HepG2 (cell line): ENCODE measurements at regions of chr13 and their contacts with region 1.

Region 1: GRCh38 chr13:97982286-97982685 is 28.8 kb downstream of the IPO5 start:
- DNase-seq: no peak
- ATAC-seq: no peak
- H3K4me3 ChIP-seq: no peak overlapping the region
- H3K27ac ChIP-seq: no peak overlapping the region
- H3K4me1 ChIP-seq: peaks cover 46% of the 10 kb centered on the region
- H3K27me3 ChIP-seq: no peaks in the 10 kb centered on the region; a peak in 1 of 5 replicates
- CTCF ChIP-seq: no peak
- EP300 ChIP-seq: no peak
- POLR2A ChIP-seq: no peak
- RAD21 ChIP-seq: no peak

Region 2: GRCh38 chr13:98022210-98022609 is 39.9 kb after region 1 on chr13:
- CTCF ChIA-PET with region 1: no interaction called
- POLR2A ChIA-PET with region 1: no interaction called
- in situ Hi-C with region 1: no loop called
- intact Hi-C with region 1: loop called (anchors 5 kb)
- DNase-seq: peak; percentile 29
- ATAC-seq: no peak
- H3K4me3 ChIP-seq: no peak overlapping the region
- H3K27ac ChIP-seq: no peak overlapping the region
- H3K4me1 ChIP-seq: peaks cover 21% of the 10 kb centered on the region
- H3K27me3 ChIP-seq: no peaks in the 10 kb centered on the region
- CTCF ChIP-seq: no peak
- EP300 ChIP-seq: no peak
- POLR2A ChIP-seq: no peak
- RAD21 ChIP-seq: no peak